ENCODE measurements at regions of chr6 and their contacts with region 1.

Region 1: GRCh38 chr6:152124429-152125074 is 317.1 kb downstream of the ESR1 start:
- DNase-seq: no peak

Region 2: GRCh38 chr6:151757506-151758245 is 366.9 kb before region 1 on chr6:
- intact Hi-C with region 1: loop called in 1 of 2 experiments (anchors 5 kb)
- DNase-seq: no peak

Region 3: GRCh38 chr6:151765444-151765886 is 359.1 kb before region 1 on chr6:
- intact Hi-C with region 1: loop called in 1 of 2 experiments (anchors 5 kb)
- DNase-seq: no peak

Region 4: DNA sequence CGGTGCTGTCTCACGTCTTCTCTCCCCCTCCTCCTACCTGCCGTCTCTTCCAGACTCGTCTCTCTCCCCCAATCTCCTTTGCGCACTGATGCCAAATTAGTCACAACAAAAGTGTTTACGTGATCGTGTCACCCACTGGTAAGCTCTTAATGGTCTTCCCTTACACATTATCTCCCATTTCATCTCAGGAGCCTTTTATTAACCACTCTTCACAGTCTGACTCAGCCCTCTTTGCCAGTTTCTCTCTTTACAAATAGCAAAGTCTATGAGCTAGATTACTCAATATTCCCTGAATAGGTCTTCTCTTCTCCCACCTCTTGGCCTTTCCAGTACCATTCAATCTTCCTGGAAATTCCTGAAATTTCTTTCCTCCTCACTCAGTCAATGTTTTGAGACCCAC is 70.1 kb before region 1 on chr6:
- intact Hi-C with region 1: no loop called
- DNase-seq: no peak

Region 5: DNA sequence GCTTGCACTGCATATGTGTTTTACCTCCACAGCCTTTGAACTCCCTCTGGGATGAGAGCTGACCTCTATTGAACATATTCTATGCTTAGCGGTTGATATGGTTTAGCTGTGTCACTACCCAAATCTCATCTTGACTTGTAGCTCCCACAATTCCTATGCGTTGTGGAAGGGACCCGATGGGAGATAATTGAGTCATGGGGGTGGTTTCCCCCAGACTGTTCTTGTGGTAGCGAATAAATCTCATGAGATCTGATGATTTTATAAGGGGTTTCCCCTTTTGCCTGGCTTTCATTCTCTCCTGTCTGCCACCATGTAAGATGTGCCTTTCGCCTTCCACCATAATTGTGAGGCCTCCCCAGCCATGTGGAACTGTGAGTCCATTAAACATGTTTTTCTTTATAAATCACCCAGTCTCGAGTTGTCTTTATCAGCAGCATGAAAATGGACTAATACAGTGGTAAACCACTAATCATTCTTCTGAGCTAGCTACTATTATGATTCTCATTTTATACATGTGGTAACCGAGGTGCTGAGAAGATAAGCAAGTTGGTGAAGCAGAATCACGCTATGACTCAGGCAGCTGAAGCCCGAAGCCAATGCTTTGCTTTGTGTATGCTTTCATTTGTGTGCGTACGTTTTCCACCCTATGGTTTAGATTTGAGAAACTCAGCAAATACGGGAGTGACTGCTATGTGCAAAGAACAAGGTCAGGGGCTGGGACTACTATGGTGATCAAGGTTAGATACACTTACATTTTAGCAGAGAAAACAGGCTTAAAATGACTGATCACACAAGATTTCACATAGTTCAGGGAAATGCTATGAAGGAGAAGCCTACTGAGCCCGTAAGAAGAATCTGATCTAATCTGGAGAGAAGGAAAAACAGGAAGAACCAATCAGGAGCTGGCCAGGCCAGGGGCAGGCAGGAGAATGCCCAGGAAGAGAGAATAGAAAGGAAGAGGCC is 46.4 kb after region 1 on chr6:
- intact Hi-C with region 1: no loop called
- DNase-seq: no peak